Activated T-helper 2 cell treated with anti-CD3 and anti-CD28 coated beads, Interferon-gamma antibody, Interleukin-2, Interleukin-4, amounts not matched to agents 10 μg/mL and 5 μg/mL and 100 μg/mL, durations not matched to agents 14 hours and 24 hours and 36 hours (primary cell): ENCODE measurements at regions of chr2 and their contacts with region 1.

Region 1: DNA sequence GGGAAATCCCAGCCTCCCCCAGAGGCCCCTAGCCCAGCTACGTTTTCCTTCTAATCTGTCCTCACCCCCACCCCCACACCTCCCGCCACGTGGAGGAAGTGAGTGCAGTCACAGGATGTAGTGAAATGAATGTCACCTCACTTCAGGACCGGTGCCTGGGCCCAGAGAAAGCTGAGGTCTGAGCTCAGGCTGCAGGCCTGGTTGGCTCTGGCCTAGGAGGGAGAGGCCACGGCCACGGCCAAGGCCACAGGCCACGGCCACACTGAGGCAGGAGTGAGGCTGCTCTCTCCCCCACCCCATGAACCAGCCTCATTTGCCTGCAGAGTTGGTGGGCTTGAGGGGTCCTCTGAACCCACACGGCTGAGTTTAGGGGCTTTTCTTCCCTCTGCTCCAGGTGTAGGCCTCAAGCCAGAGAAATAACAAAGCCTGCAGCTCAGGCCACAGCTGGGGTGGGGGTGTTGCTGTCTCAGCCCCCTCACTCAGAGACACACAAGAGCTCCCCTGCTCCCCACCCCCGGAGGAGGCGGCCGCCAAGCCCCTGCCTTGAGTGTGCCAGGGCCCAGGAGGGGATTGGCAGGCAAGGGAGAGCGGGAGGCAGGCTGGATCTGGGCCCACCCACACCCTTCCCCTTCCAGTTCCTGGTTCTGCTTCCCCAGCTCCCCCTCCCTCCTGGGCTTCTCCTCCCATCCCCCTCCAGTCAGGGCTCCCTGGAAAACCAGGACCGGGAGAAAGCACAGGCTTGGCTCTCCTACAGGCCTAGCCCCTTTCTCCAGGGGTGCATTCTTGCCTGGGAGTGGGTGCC is 27.0 kb downstream of the DNMT3A start:
- DNase-seq: peak; percentile 72
- H3K4me3 Mint-ChIP-seq: peak overlapping the region; percentile 86
- H3K27ac Mint-ChIP-seq: peak overlapping the region; percentile 97
- H3K4me1 Mint-ChIP-seq: peaks cover 53% of the 10 kb centered on the region
- H3K27me3 Mint-ChIP-seq: no peaks in the 10 kb centered on the region

Region 2: DNA sequence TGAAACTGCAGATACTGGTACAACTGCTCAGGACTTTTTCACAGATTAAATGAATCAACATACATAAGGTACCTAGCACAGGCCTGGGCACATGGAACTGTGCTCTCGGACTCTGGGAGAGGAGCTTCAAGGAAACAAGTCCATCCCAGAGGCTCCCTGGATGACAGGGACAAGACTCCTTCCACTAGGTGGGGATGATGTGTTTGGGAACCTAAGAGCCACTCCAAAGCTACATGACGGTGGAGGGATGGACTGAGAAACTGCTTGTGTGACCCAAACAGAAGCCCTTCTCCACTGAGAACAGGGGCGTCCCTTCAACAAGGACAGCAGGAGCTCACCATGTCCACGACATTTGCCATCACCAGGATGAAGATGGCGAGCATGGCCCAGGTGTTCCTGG is 484.3 kb before region 1 on chr2:
- intact Hi-C with region 1: no loop called
- DNase-seq: no peak
- H3K4me3 Mint-ChIP-seq: no peak overlapping the region
- H3K27ac Mint-ChIP-seq: no peak overlapping the region
- H3K4me1 Mint-ChIP-seq: peaks cover 21% of the 10 kb centered on the region
- H3K27me3 Mint-ChIP-seq: no peaks in the 10 kb centered on the region

Region 3: GRCh38 chr2:25286025-25286400 is 28.7 kb before region 1 on chr2:
- intact Hi-C with region 1: loop called (anchors 2 kb)
- DNase-seq: peak; percentile 70
- H3K4me3 Mint-ChIP-seq: peak overlapping the region; percentile 22
- H3K27ac Mint-ChIP-seq: peak overlapping the region; percentile 95
- H3K4me1 Mint-ChIP-seq: peaks cover 26% of the 10 kb centered on the region
- H3K27me3 Mint-ChIP-seq: no peaks in the 10 kb centered on the region

Region 4: DNA sequence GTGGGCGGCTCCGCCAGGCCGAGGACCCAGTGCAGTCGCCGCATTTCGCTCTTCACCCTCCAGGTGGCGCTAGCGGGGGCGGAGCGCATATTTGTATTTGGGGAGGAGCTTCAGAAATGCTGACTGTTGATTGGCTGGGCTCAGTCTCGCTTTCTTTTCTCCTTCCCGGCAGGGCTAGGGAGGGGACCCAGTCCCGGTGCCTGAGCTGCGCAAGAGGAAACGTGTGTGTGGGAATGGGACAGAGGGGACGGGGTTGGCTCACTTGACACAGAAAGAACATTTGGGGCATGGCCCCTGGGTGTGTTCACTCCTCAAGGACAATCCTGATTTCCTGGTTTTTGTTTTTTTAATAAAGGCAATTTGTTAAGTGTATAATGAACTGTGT is 47.3 kb after region 1 on chr2:
- intact Hi-C with region 1: loop called (anchors 5 kb)
- DNase-seq: peak; percentile 93
- H3K4me3 Mint-ChIP-seq: peak overlapping the region; percentile 81
- H3K27ac Mint-ChIP-seq: peak overlapping the region; percentile 92
- H3K4me1 Mint-ChIP-seq: peaks cover 8% of the 10 kb centered on the region
- H3K27me3 Mint-ChIP-seq: no peaks in the 10 kb centered on the region